Activated CD4-positive, alpha-beta memory T cell treated with anti-CD3 and anti-CD28 coated beads for 36 hours (primary cell): ENCODE measurements at regions of chr9 and their contacts with region 1.

Region 1: DNA sequence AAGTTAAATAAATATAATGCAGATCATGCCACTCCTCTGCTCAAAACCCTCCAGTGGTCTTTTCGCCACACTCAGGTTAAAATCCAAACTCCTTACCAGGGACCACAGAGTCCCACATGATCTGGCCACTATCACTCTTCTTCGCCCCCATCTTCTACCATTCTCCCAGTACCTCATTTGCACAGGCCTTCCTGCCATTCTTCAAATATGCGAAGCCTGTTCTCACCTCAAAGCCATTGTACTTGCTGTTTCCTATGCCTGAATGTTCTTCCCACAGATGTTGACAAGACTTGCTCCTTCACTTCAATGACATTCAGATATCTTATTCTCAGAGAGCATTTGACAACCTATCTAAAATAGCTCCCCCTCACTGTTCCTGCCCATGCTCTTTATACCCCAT is 10.9 kb downstream of the TEX10 start:
- DNase-seq: no peak
- H3K4me3 Mint-ChIP-seq: no peak overlapping the region
- H3K27ac Mint-ChIP-seq: no peak overlapping the region
- H3K4me1 Mint-ChIP-seq: peaks cover 21% of the 10 kb centered on the region
- H3K27me3 Mint-ChIP-seq: no peaks in the 10 kb centered on the region

Region 2: DNA sequence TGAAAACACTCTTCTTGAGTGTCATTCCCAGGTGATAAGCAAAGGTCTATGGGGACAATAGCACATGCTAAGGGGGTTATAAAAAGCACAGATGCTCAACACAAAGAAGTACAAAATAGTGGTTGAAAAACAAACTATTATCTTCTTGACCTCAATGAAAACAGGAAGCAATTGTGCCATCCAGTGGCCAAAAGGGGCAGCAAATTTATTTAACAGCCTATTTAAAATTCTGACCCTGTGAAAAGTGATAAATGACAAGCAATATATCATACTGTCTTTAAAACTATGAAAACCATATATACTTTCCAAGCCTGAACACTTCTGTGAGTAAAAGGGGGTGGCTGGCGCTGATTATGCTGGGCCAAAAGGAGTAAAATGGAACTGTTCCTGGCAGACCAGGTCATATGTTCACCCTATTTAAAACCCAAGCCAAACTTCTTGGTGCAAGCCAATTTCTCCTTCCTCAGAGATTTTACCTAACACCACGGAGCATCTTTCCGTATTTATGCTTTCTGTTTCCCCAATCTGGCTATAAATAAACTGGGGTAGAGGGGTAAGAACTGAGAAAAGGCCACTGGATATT is 18.8 kb before region 1 on chr9:
- CTCF ChIA-PET with region 1: interaction called, 19 read pairs
- POLR2A ChIA-PET with region 1: no interaction called
- intact Hi-C with region 1: no loop called
- DNase-seq: peak; percentile 24
- H3K4me3 Mint-ChIP-seq: no peak overlapping the region
- H3K27ac Mint-ChIP-seq: no peak overlapping the region
- H3K4me1 Mint-ChIP-seq: peaks cover 10% of the 10 kb centered on the region
- H3K27me3 Mint-ChIP-seq: no peaks in the 10 kb centered on the region